ENCODE measurements at regions of chr1 and their contacts with region 1.

Region 1: DNA sequence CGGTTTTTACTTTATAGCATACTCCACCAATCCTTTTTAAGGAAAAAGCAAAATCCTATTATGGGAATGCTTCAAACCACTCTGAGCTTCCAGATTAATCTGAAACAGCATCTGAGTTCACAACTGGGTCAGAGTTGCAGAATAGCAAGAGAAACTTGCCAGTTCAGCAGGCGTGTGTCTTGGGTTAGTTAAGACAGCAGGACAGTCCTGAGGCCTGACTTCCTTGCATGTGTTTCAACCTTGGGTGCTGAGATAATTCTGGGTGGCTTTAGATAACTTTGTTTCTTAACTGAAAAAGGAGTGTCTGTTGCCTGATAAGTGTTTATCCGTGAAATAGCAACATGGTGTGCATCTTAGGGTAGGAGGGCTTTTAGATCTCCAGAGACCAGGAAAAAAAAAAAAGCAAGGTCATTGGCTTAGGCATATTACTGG is 169.2 kb downstream of the DHRS3 start:
- DNase-seq: no peak
- H3K4me3 Mint-ChIP-seq: no peak overlapping the region
- H3K27ac Mint-ChIP-seq: peak overlapping the region; percentile 68
- H3K4me1 Mint-ChIP-seq: peaks cover 75% of the 10 kb centered on the region
- H3K27me3 Mint-ChIP-seq: no peaks in the 10 kb centered on the region

Region 2: GRCh38 chr1:12047120-12047876 is 401.5 kb before region 1 on chr1:
- CTCF ChIA-PET with region 1: no interaction called
- intact Hi-C with region 1: loop called (anchors 5 kb)
- DNase-seq: peak; percentile 87
- H3K4me3 Mint-ChIP-seq: no peak overlapping the region
- H3K27ac Mint-ChIP-seq: no peak overlapping the region
- H3K4me1 Mint-ChIP-seq: peaks cover 8% of the 10 kb centered on the region
- H3K27me3 Mint-ChIP-seq: peaks cover 8% of the 10 kb centered on the region

Region 3: DNA sequence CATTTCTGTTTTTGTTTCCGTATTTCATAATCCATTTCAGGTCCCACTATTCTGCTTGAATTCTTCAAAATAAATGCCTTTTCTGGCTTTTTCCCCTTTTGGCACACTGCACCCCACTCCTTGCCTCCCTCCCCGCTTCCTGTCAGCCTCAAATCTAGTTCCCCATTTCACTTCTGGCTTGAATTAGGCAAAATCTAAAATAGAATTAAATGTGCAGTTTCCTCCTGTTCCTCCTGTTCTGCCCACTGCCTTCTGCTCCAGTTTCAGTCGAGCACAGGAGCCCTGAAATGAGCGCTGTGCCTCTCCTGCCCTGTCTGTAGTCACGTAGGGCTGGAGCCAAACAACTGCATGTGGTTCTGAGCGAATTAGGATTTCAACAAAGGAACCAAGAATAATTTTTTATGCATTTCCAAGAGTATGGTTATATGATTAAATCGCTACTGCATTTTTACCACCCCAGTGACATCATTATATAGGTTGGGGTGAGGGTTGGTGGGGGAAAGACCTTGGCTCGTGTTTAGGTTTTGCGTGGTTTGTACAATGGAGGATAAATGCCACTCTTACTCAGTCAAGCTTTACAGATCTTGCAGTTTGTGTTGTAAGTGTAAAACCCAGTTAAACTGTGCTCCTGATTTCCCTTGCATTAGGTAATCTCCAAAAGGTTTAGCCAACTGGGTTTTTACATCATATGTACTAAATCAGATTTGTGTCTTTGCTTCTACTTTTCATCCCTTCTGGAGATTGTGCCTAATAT is 104.0 kb before region 1 on chr1:
- CTCF ChIA-PET with region 1: no interaction called
- intact Hi-C with region 1: loop called (anchors 1 kb)
- DNase-seq: peak; percentile 59
- H3K4me3 Mint-ChIP-seq: peak overlapping the region; percentile 51
- H3K27ac Mint-ChIP-seq: peak overlapping the region; percentile 82
- H3K4me1 Mint-ChIP-seq: peaks cover 61% of the 10 kb centered on the region
- H3K27me3 Mint-ChIP-seq: no peaks in the 10 kb centered on the region

Region 4: GRCh38 chr1:12407050-12407961 is 41.5 kb before region 1 on chr1:
- CTCF ChIA-PET with region 1: interaction called, 3 read pairs
- intact Hi-C with region 1: loop called (anchors 2 kb)
- DNase-seq: peak; percentile 46
- H3K4me3 Mint-ChIP-seq: no peak overlapping the region
- H3K27ac Mint-ChIP-seq: no peak overlapping the region
- H3K4me1 Mint-ChIP-seq: peaks cover 38% of the 10 kb centered on the region
- H3K27me3 Mint-ChIP-seq: no peaks in the 10 kb centered on the region

Region 5: DNA sequence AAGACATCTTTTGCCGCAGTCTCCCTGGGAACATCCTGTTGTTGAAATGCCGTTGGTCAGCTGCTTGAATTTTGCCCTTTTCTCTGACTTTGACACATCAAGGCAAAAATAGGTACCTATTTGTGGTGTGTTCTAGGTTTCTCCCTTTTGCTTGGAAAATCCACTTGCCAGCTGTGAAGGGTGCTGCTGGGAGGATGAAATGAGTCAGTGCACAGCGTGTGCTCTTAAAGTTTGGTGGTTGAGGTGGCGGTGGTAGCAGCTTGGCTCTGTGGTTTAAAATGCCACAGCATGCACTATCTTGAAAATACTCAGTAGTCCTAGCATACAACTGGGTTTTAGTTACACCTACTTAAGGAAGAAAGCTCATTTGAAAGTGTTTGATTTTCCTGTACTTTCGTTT is 14.6 kb before region 1 on chr1:
- CTCF ChIA-PET with region 1: interaction called, 10 read pairs
- intact Hi-C with region 1: loop called (anchors 1 kb)
- DNase-seq: peak; percentile 89
- H3K4me3 Mint-ChIP-seq: no peak overlapping the region
- H3K27ac Mint-ChIP-seq: peak overlapping the region; percentile 59
- H3K4me1 Mint-ChIP-seq: peaks cover 74% of the 10 kb centered on the region
- H3K27me3 Mint-ChIP-seq: no peaks in the 10 kb centered on the region

Region 6: DNA sequence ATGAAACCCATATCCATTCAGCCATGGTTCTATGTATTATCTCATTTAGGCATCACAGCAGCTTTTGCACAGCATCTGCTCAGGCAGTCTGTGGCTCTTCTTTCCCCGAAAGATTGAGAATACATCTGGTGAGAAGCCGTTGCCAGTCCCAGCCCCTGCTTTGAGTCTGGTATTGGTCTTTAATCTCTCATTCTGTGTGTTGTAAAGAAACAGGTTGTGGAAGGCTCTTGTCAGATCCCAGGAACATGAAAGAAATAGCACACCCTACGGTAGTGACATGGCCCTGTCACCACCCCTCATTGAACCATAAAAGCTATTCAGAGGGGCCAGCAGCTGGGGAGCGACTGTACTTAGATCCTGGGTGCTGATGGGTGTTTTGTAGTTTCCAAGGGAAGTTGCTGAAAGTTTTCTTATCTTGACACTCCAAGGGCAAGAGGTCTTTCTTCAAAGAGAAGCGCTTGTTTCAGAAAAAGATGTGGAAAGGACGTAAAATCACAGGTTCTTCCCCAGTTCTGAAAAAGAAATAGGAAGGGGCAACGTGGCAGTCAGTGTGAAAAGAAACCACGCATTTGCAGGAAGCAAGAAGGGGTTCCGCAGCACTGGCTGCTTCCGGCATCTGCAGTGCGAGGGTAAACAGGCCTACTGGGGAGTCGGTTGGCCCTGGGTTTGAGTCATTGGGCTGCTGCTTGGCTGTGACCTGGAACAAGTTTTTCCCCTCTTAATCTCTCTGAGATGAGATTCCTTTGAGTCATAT is 24.2 kb after region 1 on chr1:
- CTCF ChIA-PET with region 1: interaction called, 3 read pairs
- intact Hi-C with region 1: loop called (anchors 1 kb)
- DNase-seq: peak; percentile 95
- H3K4me3 Mint-ChIP-seq: peak overlapping the region; percentile 56
- H3K27ac Mint-ChIP-seq: peak overlapping the region; percentile 98
- H3K4me1 Mint-ChIP-seq: peaks cover 89% of the 10 kb centered on the region
- H3K27me3 Mint-ChIP-seq: no peaks in the 10 kb centered on the region

Region 7: DNA sequence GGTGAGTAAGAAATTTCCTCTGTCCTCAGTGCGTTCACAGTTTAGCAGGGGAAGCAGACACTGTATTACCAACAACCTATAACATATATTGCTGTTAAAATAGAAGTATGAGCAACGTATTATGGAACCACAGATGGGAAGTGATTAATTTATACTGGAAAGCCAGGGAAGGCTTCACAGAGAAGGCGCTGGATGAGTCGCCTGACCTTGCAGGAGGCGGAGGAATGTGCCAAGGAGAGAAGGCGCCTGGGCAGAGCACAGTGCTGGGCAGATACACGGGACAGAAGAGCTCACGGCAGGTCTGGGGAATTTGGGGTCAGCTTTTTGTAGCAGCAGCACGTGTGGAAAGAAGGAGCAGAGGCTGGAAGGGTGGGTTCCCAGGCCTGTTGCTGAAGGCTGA is 52.9 kb after region 1 on chr1:
- CTCF ChIA-PET with region 1: no interaction called
- intact Hi-C with region 1: no loop called
- DNase-seq: no peak
- H3K4me3 Mint-ChIP-seq: no peak overlapping the region
- H3K27ac Mint-ChIP-seq: peak overlapping the region; percentile 63
- H3K4me1 Mint-ChIP-seq: peaks cover 43% of the 10 kb centered on the region
- H3K27me3 Mint-ChIP-seq: no peaks in the 10 kb centered on the region

Region 8: DNA sequence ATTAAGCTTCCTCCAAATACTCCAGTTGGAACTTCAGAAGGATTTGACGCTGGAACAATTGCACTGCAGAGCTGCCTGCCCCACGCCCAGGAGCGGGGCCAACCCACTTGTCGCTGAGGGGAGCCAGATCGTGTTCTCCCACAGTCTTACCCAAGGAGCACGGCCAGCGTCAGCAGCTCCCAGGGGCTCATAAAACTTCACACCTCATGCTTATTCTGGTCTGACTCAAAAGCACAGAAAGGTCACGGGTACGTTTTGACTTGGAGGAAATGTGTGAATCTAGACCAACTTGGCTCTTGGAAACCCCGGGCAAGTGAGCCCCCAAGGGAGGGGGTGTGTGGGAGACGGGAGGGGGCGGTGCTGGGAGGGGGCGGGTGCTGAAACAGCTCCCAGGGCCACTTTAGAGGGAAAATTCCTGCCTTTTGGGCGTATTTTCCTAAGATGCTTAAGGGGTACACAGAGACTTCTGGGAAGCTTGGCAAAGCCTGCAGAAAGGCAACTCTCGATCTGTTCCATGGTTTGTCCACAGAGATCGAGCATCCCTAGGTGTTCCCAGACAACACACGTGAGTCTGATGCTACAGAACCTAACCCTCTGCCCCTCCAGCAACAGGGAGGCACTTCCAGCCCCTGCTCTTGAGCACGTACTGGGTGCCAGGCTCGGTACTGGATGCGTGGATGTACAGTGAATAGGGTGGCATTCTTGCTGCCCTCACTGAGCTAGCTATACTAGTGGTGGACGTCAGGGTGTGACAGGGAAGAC is 70.3 kb after region 1 on chr1:
- CTCF ChIA-PET with region 1: interaction called, 3 read pairs
- intact Hi-C with region 1: loop called (anchors 1 kb)
- DNase-seq: peak; percentile 84
- H3K4me3 Mint-ChIP-seq: no peak overlapping the region
- H3K27ac Mint-ChIP-seq: peak overlapping the region; percentile 67
- H3K4me1 Mint-ChIP-seq: peaks cover 43% of the 10 kb centered on the region
- H3K27me3 Mint-ChIP-seq: no peaks in the 10 kb centered on the region

Measured in activated naive CD4-positive, alpha-beta T cell treated with anti-CD3 and anti-CD28 coated beads for 36 hours (primary cell).